ENCODE measurements at regions of chr14 and their contacts with region 1.

Region 1: GRCh38 chr14:99729991-99730868 is 46.1 kb downstream of the CYP46A1 start:
- DNase-seq: peak; percentile 74
- ATAC-seq: peak; percentile 85
- H3K4me3 Mint-ChIP-seq: no peak overlapping the region
- H3K27ac Mint-ChIP-seq: no peak overlapping the region
- H3K4me1 Mint-ChIP-seq: no peaks in the 10 kb centered on the region
- H3K27me3 Mint-ChIP-seq: peaks cover 20% of the 10 kb centered on the region

Region 2: DNA sequence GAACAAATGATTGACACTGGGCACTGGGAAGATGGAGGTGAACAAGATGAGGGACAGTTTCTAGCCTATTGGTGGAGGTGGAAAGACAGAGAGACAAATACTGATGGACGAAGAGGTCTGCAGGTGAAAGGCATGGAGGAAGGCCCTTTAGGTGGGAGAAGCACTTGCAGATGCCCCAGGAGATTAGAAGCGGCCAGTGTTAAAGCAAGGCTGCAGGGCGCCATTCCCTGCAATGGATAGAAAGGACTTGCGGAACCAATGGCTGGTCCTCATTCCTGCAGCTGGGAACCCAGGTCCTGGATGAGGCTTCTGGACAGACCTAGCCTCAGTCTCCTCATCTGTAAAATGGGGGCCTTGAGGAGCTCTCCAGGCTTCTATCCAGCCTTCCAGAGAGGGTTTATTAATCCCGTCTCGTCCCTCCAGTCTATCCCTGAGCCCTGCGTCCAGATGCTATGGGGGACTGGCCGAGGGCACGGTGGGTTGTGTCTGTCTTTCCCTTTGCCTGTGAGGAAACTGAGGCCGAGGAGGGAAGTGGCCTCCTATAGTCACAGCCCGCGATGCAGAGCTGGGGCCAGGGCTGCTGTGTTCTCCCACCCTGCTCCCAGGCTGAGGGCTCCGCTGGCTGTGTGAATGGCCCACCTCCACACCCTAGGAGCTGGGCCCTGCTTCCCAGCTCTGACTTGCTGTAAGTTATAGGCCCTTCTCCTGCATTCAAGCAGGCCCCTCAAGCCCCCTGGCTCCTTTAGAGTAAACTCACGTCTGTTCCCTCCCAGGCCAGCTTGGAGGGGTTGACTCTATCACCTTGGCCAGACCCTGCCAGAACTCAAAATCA is 13.2 kb before region 1 on chr14:
- CTCF ChIA-PET with region 1: interaction called, 14 read pairs
- DNase-seq: peak; percentile 34
- ATAC-seq: no peak
- H3K4me3 Mint-ChIP-seq: no peak overlapping the region
- H3K27ac Mint-ChIP-seq: no peak overlapping the region
- H3K4me1 Mint-ChIP-seq: no peaks in the 10 kb centered on the region
- H3K27me3 Mint-ChIP-seq: peaks cover 9% of the 10 kb centered on the region

Region 3: DNA sequence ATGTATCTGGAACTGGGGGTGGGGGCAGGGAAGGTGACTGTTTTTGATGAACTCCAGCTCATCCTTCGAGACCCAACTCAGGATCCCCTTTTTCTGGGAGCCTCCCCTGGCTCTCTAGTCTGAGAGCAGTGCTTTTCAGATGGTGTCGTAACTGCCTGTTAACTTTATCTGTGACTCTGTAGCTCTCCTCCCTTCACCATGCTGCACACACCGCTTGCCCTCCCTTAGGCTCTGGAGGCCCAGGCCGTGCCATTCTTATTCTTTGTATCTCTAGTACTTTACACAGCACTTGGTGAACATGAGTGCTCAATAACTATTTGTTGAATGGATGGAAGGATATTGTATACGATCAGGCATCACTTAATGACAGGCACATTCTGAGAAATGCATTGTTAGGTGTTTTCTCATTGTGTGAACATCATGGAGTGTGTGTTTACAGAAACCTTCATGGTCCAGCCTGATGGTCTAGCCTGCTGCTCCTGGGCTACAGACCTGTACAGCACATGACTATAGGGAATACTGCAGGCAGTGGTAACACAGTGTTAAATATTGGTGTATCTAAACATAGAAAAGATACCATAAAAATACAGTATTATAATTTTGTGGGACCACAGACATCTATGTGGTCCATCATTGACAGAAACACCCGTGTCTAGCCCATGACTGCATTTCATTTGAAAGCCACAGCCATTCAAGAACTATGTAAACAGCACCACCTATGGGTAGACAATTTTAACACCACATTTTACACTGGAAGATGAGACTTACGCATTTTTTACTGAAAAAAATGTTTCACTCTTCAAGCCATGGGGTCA is 154.8 kb after region 1 on chr14:
- CTCF ChIA-PET with region 1: interaction called, 39 read pairs
- DNase-seq: no peak
- ATAC-seq: peak; percentile 65
- H3K4me3 Mint-ChIP-seq: no peak overlapping the region
- H3K27ac Mint-ChIP-seq: no peak overlapping the region
- H3K4me1 Mint-ChIP-seq: no peaks in the 10 kb centered on the region
- H3K27me3 Mint-ChIP-seq: peaks cover 19% of the 10 kb centered on the region

Measured in activated CD8-positive, alpha-beta memory T cell treated with anti-CD3 and anti-CD28 coated beads, Interleukin-2, amount 10 ng/mL, durations not matched to agents 7 days and 5 days (primary cell).